AG04449 (cell line): ENCODE measurements at regions of chr5 and their contacts with region 1.

Region 1: GRCh38 chr5:177454397-177455035 is 7.9 kb downstream of the PRR7 start:
- DNase-seq: no peak
- H3K4me3 ChIP-seq: peak overlapping the region; percentile 47
- CTCF ChIP-seq: peak; percentile 79

Region 2: GRCh38 chr5:177049285-177049684 is 405.2 kb before region 1 on chr5:
- CTCF ChIA-PET with region 1: no interaction called
- POLR2A ChIA-PET with region 1: no interaction called
- DNase-seq: no peak
- H3K4me3 ChIP-seq: no peak overlapping the region
- CTCF ChIP-seq: no peak

Region 3: DNA sequence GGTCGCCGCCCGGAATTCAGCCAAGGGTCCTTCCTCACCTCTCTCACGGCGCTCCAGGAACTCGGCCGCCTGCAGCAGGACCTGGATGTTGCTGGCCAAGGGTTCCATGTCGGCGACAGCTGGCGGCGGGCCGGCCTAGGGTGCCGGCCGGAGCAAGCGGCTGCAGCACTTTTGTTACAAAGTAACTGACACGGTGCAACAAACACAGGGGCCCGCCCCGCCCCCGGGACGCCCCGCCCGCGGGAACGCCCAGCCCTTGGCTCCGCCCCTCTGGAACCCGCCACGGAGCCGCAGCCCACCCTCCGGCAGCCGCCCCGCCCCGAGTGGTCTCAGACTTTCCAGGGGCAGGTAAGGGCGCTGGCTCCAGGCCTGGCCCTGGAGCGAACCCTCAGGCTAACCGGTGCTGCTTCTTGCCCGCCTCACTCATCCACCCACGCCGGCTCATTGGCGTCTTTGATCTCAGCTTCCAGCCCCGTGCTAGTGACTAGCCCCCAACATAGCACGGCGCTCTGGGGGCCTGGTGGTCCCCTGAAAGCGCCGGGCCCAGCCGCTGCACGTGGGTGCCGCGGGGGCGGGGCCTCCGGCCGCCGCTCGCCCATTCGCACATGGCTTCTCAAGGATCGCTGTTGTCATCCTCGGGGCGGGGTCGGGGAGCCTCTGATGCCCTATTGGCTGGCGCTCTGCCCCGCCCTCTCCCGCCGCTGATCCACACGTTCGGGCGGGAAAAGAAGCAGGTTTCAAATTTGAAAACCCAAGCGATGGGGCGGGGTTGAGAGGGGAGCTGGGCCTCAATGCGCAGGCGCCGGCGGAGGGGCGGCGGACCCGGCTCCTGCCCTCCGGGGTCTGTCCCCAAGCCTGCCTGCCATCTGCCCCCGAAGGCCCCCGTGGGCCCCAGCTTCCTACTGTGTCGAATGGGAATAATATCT is 142.5 kb before region 1 on chr5 and contains the start of gene MXD3:
- CTCF ChIA-PET with region 1: interaction called, 261 read pairs
- POLR2A ChIA-PET with region 1: no interaction called
- DNase-seq: no peak
- H3K4me3 ChIP-seq: peak within 1 kb of the TSS; percentile 68
- CTCF ChIP-seq: no peak

Region 4: DNA sequence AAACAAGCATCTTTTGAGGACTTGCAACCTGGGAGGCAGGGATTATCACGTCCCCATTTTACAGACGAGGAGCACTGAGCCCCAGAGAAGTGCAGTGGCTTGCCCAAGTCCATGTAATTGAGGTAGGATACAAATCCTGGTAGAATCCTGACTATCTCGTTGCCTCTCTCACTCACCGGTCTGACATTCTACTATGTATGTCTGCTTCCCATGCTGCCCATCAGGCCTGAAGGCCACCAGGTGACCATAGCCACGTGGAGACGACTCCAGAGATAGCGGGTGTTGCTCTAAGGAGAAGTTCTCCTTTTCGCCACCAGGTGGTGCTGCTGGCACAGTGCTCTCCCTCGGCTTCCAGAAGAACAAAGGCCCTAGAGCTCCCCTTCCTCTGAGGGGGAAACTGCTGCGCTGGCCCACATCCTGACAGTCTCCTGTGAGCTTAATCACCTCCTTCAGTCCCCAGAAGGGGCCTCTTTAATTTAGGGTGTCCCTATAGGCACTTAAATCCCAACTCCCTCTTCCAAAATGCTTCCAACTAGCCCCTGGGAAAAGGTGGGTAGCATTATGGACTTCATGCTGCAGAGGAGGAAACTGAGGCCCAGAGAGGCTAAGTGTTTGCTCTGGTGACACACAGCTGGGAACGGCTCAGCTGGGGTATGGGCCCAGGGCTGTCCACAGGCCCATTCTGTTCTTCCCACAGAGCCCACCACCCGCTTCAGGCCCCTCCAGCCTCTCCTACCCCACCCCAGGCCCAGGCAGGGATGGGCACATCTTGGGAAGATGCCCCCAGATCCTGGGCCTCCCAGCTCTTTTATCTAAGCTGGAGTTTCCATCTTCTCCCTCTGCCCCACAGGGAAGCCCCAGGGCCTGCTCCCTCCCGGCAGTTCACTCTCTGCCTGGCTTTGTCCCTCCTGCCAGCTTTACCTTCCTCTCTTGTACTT is 63.9 kb before region 1 on chr5:
- CTCF ChIA-PET with region 1: interaction called, 412 read pairs
- POLR2A ChIA-PET with region 1: interaction called, 13 read pairs
- DNase-seq: no peak
- H3K4me3 ChIP-seq: no peak overlapping the region
- CTCF ChIP-seq: peak; percentile 89

Region 5: GRCh38 chr5:177440211-177440971 is 14.1 kb before region 1 on chr5:
- CTCF ChIA-PET with region 1: interaction called, 87 read pairs
- POLR2A ChIA-PET with region 1: interaction called, 5 read pairs
- DNase-seq: no peak
- H3K4me3 ChIP-seq: no peak overlapping the region
- CTCF ChIP-seq: no peak

Region 6: GRCh38 chr5:177473461-177474001 is 19.0 kb after region 1 on chr5 and contains the start of gene DBN1:
- CTCF ChIA-PET with region 1: interaction called, 168 read pairs
- POLR2A ChIA-PET with region 1: interaction called, 37 read pairs
- DNase-seq: no peak
- H3K4me3 ChIP-seq: peak within 1 kb of the TSS; percentile 89
- CTCF ChIP-seq: no peak